ENCODE measurements at regions of chr6 and their contacts with region 1.

Region 1: DNA sequence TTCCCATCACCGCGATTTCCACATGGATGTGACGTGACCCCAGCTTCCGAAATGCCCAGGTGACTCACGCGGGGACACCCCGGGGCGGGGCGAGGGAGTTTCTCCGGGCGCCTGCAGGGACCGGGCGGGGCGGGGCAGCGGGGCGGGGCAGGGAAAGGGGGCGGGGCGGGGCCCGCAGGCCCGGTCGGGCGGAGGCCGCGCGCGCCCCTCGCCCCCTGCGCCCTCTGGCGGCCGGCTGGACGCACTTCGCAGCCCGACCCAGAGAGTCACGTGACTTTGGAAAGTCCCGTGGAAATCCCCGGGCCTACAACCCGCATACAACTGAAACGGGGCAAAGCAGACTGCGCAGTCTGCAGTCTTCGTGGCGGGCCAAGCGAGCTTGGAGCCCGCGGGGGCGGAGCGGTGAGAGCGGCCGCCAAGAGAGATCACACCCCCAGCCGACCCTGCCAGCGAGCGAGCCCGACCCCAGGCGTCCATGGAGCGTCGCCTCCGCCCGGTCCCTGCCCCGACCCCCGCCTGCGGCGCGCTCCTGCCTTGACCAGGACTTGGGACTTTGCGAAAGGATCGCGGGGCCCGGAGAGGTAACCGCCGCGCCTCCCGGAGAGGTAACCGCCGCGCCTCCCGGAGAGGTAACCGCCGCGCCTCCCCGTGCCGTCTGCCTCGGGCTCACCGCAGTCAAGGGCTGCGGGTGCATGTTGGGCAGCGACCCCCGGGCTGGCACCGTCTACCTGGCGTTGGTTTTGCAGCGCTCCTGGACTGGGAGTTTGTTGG is at the start of gene TNFAIP3:
- DNase-seq: peak; percentile 99
- ATAC-seq: peak; percentile 80
- H3K4me3 ChIP-seq: peak within 1 kb of the TSS; percentile 95 to 99 (median 96)
- H3K4me3 Mint-ChIP-seq: peak within 1 kb of the TSS; percentile 94
- H3K27ac ChIP-seq: peak within 1 kb of the TSS; percentile 96 to 97
- H3K27ac Mint-ChIP-seq: peak within 1 kb of the TSS; percentile 99
- H3K4me1 ChIP-seq: peaks cover 40 to 43% of the 10 kb centered on the region in 2 donors
- H3K4me1 Mint-ChIP-seq: peaks cover 50% of the 10 kb centered on the region
- H3K27me3 ChIP-seq: no peaks in the 10 kb centered on the region
- H3K27me3 Mint-ChIP-seq: no peaks in the 10 kb centered on the region
- CTCF ChIP-seq: peak; percentile 73
- total RNA-seq, gene TNFAIP3: 92.0 and 92.2 TPM in 2 replicates

Region 2: DNA sequence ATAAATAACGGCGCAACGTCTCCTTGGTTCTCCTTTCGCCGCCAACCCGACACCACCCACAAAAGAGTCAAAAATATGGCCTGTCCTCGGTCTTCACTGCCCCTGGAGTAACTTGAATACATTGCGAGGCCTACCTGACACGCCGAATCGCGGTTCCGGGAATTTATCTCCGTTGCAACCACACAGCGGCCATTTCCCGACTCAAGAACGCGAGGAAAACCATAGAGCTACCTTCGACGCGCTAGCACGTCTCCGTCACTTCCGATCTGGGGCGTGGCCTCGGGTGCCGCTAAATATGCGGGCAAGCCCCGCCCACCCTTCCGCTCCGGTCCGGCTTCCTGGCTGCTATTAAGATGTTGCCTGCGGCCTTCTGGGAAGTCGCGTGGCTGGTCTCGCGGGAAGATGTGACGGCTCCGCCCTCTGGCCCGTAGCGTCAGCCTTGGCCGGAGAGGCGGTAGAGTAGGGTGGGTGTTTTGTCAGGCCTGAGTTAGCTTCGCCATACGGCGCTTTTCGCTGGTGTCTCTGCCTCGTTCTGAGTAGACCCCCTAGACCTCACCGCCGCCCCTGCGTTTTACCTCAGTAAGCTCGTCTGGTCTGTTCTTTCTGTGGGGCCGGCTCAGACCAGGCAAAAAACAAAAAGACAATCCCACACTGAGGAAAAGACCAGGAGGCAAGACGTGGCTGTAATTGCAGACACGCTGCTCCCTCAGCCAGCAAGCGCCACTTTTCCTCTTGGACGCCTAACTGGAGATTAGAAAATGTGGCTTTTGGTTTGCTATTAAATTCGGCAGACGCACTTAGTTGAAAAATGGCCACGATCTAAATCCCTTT is 1577.3 kb before region 1 on chr6 and contains the start of gene BCLAF1:
- CTCF ChIA-PET with region 1: no interaction called
- POLR2A ChIA-PET with region 1: no interaction called
- intact Hi-C with region 1: loop called (anchors 5 kb)
- DNase-seq: peak; percentile 100
- ATAC-seq: peak; percentile 78
- H3K4me3 ChIP-seq: peak within 1 kb of the TSS; percentile 93 to 100 (median 99)
- H3K4me3 Mint-ChIP-seq: peak within 1 kb of the TSS; percentile 98
- H3K27ac ChIP-seq: peak within 1 kb of the TSS; percentile 99 to 100
- H3K27ac Mint-ChIP-seq: peak within 1 kb of the TSS; percentile 100
- H3K4me1 ChIP-seq: peaks cover 38 to 49% of the 10 kb centered on the region in 2 donors
- H3K4me1 Mint-ChIP-seq: peaks cover 44% of the 10 kb centered on the region
- H3K27me3 ChIP-seq: no peaks in the 10 kb centered on the region
- H3K27me3 Mint-ChIP-seq: no peaks in the 10 kb centered on the region
- CTCF ChIP-seq: no peak
- total RNA-seq, gene BCLAF1: 256 and 268 TPM in 2 replicates

Region 3: GRCh38 chr6:137218917-137219663 is 648.0 kb before region 1 on chr6 and contains the start of gene IFNGR1:
- CTCF ChIA-PET with region 1: no interaction called
- POLR2A ChIA-PET with region 1: no interaction called
- intact Hi-C with region 1: loop called (anchors 10 kb)
- DNase-seq: peak; percentile 96
- ATAC-seq: peak; percentile 86
- H3K4me3 ChIP-seq: peak within 1 kb of the TSS; percentile 76 to 99 (median 88)
- H3K4me3 Mint-ChIP-seq: peak within 1 kb of the TSS; percentile 97
- H3K27ac ChIP-seq: peak within 1 kb of the TSS; percentile 95 to 97
- H3K27ac Mint-ChIP-seq: peak within 1 kb of the TSS; percentile 97
- H3K4me1 ChIP-seq: peaks cover 78 to 81% of the 10 kb centered on the region in 2 donors
- H3K4me1 Mint-ChIP-seq: peaks cover 79% of the 10 kb centered on the region
- H3K27me3 ChIP-seq: no peaks in the 10 kb centered on the region
- H3K27me3 Mint-ChIP-seq: no peaks in the 10 kb centered on the region
- CTCF ChIP-seq: no peak
- total RNA-seq, gene IFNGR1: 48.2 and 51.2 TPM in 2 replicates

Region 4: DNA sequence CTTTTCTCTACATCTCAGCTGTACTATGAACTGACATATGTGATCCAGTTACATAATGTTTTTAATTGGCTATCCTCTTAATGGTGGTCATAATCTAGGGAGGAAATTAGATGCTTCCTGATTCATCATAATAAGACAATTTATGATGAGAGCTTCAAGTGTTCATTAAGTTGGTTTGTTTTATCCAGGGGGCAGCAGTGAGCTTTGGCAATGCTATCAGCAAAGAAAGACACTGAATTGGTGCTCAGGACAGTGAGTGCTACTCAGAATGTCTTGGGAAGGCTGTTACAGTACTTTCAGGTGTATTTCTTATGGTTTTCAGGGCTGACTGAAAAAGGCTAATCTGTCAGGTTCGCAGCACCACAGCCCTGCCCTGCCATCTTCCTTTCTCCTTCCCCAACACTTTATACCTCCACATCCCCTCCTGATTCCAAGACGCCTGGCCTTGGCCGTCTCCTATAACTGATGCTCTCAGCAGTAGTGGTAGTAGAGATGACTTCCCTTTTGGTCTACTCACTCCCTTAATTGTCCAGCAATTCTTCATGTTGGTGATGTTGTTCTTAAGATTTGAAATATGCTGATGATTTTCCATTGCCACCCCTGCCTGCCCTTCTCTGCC is 67.0 kb before region 1 on chr6:
- CTCF ChIA-PET with region 1: interaction called, 31 read pairs
- POLR2A ChIA-PET with region 1: interaction called, 6 read pairs
- intact Hi-C with region 1: loop called (anchors 1 kb)
- DNase-seq: peak; percentile 83
- ATAC-seq: peak; percentile 80
- H3K4me3 ChIP-seq: no peak overlapping the region
- H3K4me3 Mint-ChIP-seq: no peak overlapping the region
- H3K27ac ChIP-seq: no peak overlapping the region
- H3K27ac Mint-ChIP-seq: peak overlapping the region; percentile 16
- H3K4me1 ChIP-seq: peaks cover 9% of the 10 kb centered on the region in 2 donors
- H3K4me1 Mint-ChIP-seq: peaks cover 21% of the 10 kb centered on the region
- H3K27me3 ChIP-seq: no peaks in the 10 kb centered on the region
- H3K27me3 Mint-ChIP-seq: no peaks in the 10 kb centered on the region
- CTCF ChIP-seq: peak; percentile 68

Region 5: GRCh38 chr6:137927777-137928218 is 60.7 kb after region 1 on chr6:
- CTCF ChIA-PET with region 1: interaction called, 7 read pairs
- POLR2A ChIA-PET with region 1: interaction called, 9 read pairs
- intact Hi-C with region 1: loop called (anchors 5 kb)
- DNase-seq: peak; percentile 89
- ATAC-seq: peak; percentile 95
- H3K4me3 ChIP-seq: peak overlapping the region in 2 of 5 experiments; percentile 25 to 56
- H3K4me3 Mint-ChIP-seq: peak overlapping the region; percentile 58
- H3K27ac ChIP-seq: peak overlapping the region; percentile 84 to 87
- H3K27ac Mint-ChIP-seq: peak overlapping the region; percentile 76
- H3K4me1 ChIP-seq: peaks cover 32 to 37% of the 10 kb centered on the region in 2 donors
- H3K4me1 Mint-ChIP-seq: peaks cover 40% of the 10 kb centered on the region
- H3K27me3 ChIP-seq: no peaks in the 10 kb centered on the region
- H3K27me3 Mint-ChIP-seq: no peaks in the 10 kb centered on the region
- CTCF ChIP-seq: no peak

Region 6: GRCh38 chr6:138109042-138109997 is 242.2 kb after region 1 on chr6:
- CTCF ChIA-PET with region 1: interaction called, 3 read pairs
- POLR2A ChIA-PET with region 1: no interaction called
- intact Hi-C with region 1: loop called (anchors 5 kb)
- DNase-seq: peak; percentile 81
- ATAC-seq: peak; percentile 66
- H3K4me3 ChIP-seq: no peak overlapping the region
- H3K4me3 Mint-ChIP-seq: peak overlapping the region; percentile 11
- H3K27ac ChIP-seq: no peak overlapping the region
- H3K27ac Mint-ChIP-seq: no peak overlapping the region
- H3K4me1 ChIP-seq: peaks cover 14 to 19% of the 10 kb centered on the region in 2 donors
- H3K4me1 Mint-ChIP-seq: peaks cover 18% of the 10 kb centered on the region
- H3K27me3 ChIP-seq: peaks cover 0 to 42% (median 33%) of the 10 kb centered on the region in 4 experiments
- H3K27me3 Mint-ChIP-seq: peaks cover 48% of the 10 kb centered on the region
- CTCF ChIP-seq: peak; percentile 99

Region 7: DNA sequence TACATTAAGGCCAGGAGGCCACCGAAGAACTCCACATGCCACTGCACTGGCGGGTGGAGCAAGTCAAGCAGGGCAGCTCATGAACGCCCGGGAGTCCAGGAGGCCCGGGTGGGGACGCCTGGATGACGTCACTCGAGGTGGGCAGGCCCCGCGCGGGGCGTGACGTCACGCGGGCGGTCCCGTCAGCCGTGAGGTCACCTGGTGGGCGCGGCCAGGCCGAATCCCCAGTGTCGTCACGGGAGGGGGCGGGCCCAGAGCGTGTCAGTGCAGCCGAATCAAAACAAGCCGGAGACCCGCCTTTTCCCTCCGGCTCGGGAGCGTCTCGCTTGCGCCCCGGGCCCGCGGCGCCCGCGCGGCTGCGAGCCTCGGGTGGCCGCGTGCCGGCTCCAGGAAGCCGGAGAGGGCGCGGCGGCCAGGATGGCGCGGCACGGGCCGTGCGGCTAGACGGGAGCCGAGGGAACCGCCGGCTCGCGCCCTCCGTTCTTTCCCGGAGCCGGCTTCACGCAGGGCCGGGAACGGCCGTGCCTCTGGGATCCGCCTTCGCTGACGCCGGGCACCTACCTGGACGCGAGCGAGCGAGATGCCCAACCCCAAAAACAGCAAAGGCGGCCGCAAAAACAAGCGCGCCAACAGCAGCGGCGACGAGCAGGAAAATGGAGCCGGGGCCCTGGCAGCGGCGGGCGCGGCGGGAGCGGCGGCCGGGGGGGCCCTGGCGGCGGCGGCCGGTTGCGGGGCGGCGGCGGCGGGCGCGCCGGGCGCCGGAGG is 1267.9 kb after region 1 on chr6 and contains the start of gene HECA:
- CTCF ChIA-PET with region 1: no interaction called
- POLR2A ChIA-PET with region 1: no interaction called
- intact Hi-C with region 1: loop called (anchors 5 kb)
- DNase-seq: peak; percentile 98
- ATAC-seq: peak; percentile 73
- H3K4me3 ChIP-seq: peak within 1 kb of the TSS; percentile 67 to 93 (median 87)
- H3K4me3 Mint-ChIP-seq: peak within 1 kb of the TSS; percentile 97
- H3K27ac ChIP-seq: peak within 1 kb of the TSS; percentile 88 to 94
- H3K27ac Mint-ChIP-seq: peak within 1 kb of the TSS; percentile 98
- H3K4me1 ChIP-seq: peaks cover 68 to 73% of the 10 kb centered on the region in 2 donors
- H3K4me1 Mint-ChIP-seq: peaks cover 71% of the 10 kb centered on the region
- H3K27me3 ChIP-seq: no peaks in the 10 kb centered on the region
- H3K27me3 Mint-ChIP-seq: no peaks in the 10 kb centered on the region
- CTCF ChIP-seq: no peak
- total RNA-seq, gene HECA: 50.4 and 53.0 TPM in 2 replicates